PC-3 (cell line): ENCODE measurements at regions of chr20 and their contacts with region 1.

Region 1: GRCh38 chr20:18412221-18412901 is 54.5 kb downstream of the DZANK1 start:
- DNase-seq: no peak
- ATAC-seq: no peak
- H3K4me3 ChIP-seq: no peak overlapping the region
- H3K27ac ChIP-seq: no peak overlapping the region
- H3K4me1 ChIP-seq: 0 out of 2 replicates have a peak, but pooled peaks cover 3% of the 10 kb centered on the region
- H3K27me3 ChIP-seq: no peaks in the 10 kb centered on the region
- CTCF ChIP-seq: no peak

Region 2: GRCh38 chr20:18466894-18467730 is 54.8 kb after region 1 on chr20 and contains the starts of genes DZANK1 and POLR3F:
- CTCF ChIA-PET with region 1: interaction called, 3 read pairs
- POLR2A ChIA-PET with region 1: no interaction called
- intact Hi-C with region 1: loop called (anchors 1 kb)
- DNase-seq: peak; percentile 98
- ATAC-seq: peak; percentile 99
- H3K4me3 ChIP-seq: peak within 1 kb of the TSS; percentile 90
- H3K27ac ChIP-seq: peak within 1 kb of the TSS; percentile 86
- H3K4me1 ChIP-seq: peaks cover 16% of the 10 kb centered on the region
- H3K27me3 ChIP-seq: no peaks in the 10 kb centered on the region
- CTCF ChIP-seq: no peak
- total RNA-seq, gene DZANK1: 2.6 and 3.2 TPM in 2 replicates
- total RNA-seq, gene POLR3F: 28.2 and 31.8 TPM in 2 replicates

Region 3: GRCh38 chr20:18507218-18508021 is 95.1 kb after region 1 on chr20 and contains the start of gene SEC23B:
- CTCF ChIA-PET with region 1: no interaction called
- POLR2A ChIA-PET with region 1: no interaction called
- intact Hi-C with region 1: loop called (anchors 1 kb)
- DNase-seq: peak; percentile 99
- ATAC-seq: peak; percentile 97
- H3K4me3 ChIP-seq: peak within 1 kb of the TSS; percentile 93
- H3K27ac ChIP-seq: peak within 1 kb of the TSS; percentile 87
- H3K4me1 ChIP-seq: peaks cover 13% of the 10 kb centered on the region
- H3K27me3 ChIP-seq: no peaks in the 10 kb centered on the region
- CTCF ChIP-seq: no peak
- total RNA-seq, gene SEC23B: 82.1 and 89.5 TPM in 2 replicates

Region 4: GRCh38 chr20:18566892-18567742 is 154.8 kb after region 1 on chr20 and contains the start of gene SMIM26:
- CTCF ChIA-PET with region 1: no interaction called
- POLR2A ChIA-PET with region 1: no interaction called
- intact Hi-C with region 1: loop called (anchors 10 kb)
- DNase-seq: peak; percentile 98
- ATAC-seq: peak; percentile 99
- H3K4me3 ChIP-seq: peak within 1 kb of the TSS; percentile 94
- H3K27ac ChIP-seq: peak within 1 kb of the TSS; percentile 36
- H3K4me1 ChIP-seq: peaks cover 7% of the 10 kb centered on the region
- H3K27me3 ChIP-seq: no peaks in the 10 kb centered on the region
- CTCF ChIP-seq: no peak
- total RNA-seq, gene SMIM26: 76.7 and 83.6 TPM in 2 replicates

Region 5: GRCh38 chr20:18632196-18633009 is 220.0 kb after region 1 on chr20:
- CTCF ChIA-PET with region 1: interaction called, 3 read pairs
- POLR2A ChIA-PET with region 1: no interaction called
- intact Hi-C with region 1: loop called (anchors 2 kb)
- DNase-seq: peak; percentile 67
- ATAC-seq: peak; percentile 98
- H3K4me3 ChIP-seq: no peak overlapping the region
- H3K27ac ChIP-seq: no peak overlapping the region
- H3K4me1 ChIP-seq: no peaks in the 10 kb centered on the region
- H3K27me3 ChIP-seq: no peaks in the 10 kb centered on the region
- CTCF ChIP-seq: peak; percentile 99

Region 6: DNA sequence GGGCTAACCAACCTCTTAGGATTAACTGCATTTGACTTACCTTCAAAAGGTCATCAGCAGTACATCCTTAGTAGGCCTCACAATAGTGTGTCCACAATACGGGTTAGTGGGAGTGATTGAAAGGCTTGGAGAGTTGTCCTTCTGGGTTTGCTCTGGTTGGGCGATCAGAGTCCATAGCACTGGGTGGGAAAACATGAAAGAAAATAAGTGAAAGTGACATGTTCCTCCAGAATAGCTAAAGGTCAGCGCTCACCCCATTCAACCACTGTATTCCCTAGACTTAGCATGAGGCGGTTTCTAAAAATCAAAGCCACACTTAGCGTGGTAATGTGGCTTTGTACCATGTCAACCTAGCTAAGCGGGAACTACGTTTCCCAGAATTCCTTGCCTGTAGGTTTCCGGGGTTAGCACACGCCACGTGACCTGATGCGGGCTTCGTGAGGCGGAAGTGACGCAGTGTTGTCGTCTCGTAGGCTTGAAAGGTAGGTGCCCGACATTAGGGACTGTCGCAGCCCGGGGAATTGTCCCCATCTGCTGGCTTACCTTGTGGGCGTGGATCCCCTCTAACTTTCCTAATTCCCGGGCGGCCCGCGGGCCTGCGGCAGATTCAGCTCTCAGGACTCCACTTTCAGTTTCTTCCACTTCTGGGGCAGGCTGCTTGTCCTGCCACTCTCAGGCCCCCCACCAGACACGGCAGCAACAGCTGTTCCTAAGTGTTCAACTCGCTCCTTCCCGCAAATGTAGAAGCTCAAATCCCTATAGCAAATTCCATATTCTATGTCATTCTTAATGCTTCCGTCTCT is 381.5 kb after region 1 on chr20:
- CTCF ChIA-PET with region 1: no interaction called
- POLR2A ChIA-PET with region 1: no interaction called
- intact Hi-C with region 1: loop called (anchors 5 kb)
- DNase-seq: peak; percentile 91
- ATAC-seq: peak; percentile 98
- H3K4me3 ChIP-seq: peak overlapping the region; percentile 83
- H3K27ac ChIP-seq: no peak overlapping the region
- H3K4me1 ChIP-seq: peaks cover 6% of the 10 kb centered on the region
- H3K27me3 ChIP-seq: peaks cover 23% of the 10 kb centered on the region
- CTCF ChIP-seq: peak; percentile 29; the same call in 1 of the 2 replicates

Region 7: DNA sequence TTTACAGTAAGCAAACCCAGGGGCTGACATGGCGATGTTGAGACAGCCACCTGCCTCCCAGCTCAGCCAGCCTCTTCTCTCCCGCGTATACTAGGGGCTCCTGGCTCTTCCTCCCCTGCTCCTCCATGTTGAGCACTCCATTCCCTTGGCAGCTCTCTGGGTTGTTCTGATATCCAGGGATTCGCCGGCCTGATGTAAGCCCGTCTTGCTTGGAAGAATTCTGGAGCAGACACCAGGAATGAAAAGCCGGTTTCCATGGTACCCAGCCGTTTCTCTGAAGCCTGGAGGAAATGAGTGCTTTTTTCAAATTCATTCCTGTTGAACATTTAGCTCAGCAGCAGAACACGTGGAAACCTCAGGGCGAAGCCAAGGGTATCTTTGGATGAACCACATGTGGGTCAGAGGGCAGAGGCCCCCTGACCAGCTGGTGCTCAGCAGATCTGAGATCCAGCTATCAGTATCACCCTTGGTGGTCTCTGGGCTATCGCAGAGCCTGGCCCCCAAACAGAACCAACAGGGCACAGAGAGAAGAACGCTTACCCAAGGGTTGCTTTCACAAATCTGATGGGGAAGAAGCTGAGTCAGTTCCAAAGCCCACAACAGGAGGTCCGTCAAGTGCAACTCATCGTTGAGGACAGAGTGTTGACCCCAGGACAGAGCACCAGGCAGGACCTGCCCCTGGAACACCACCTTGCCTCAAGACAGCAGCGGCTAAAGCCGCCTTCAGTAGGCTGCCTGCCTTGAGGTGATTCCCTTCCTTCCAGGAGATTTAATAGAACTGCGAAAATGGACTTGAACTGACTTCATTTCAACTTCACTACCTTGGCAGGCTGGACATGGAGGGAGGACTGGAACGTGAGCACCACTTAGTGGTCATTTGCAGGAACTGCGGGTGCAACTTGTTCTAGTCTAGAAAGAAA is 1249.6 kb after region 1 on chr20:
- CTCF ChIA-PET with region 1: no interaction called
- POLR2A ChIA-PET with region 1: no interaction called
- intact Hi-C with region 1: loop called (anchors 2 kb)
- DNase-seq: peak; percentile 91
- ATAC-seq: peak; percentile 84
- H3K4me3 ChIP-seq: no peak overlapping the region
- H3K27ac ChIP-seq: no peak overlapping the region
- H3K4me1 ChIP-seq: no peaks in the 10 kb centered on the region
- H3K27me3 ChIP-seq: peaks cover 72% of the 10 kb centered on the region
- CTCF ChIP-seq: peak; percentile 98